Thyroid gland (tissue), 4 donors: ENCODE measurements at regions of chr1 and their contacts with region 1.

Region 1: GRCh38 chr1:44049839-44050238 is 18.6 kb upstream of the SLC6A9 start:
- DNase-seq: no peak
- H3K4me3 ChIP-seq: no peak overlapping the region
- H3K27ac ChIP-seq: no peak overlapping the region
- H3K4me1 ChIP-seq: no peaks in the 10 kb centered on the region
- H3K27me3 ChIP-seq: no peaks in the 10 kb centered on the region
- CTCF ChIP-seq: no peak
- POLR2A ChIP-seq: no peak

Region 2: DNA sequence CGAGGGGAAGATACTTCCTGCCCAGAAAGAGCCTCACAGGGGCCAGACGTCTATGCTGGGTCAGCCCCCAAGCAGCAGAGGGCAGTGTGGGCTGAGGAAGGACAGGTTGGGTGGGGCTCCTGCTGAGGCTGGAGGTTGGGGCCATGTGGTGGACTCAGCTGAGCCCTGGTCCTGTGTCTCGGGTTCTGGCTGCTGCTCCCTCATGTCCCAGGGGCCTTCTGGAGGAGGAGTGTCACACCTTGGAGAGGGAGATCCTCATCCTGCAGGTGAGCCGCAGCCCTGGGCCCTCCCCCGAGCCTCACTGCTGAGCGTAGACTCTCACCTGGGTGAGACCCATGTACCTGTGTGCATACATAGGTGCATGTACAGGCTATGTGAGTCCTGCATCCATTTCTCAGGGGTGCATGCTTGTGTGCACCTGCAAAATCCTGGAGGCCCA is 54.9 kb before region 1 on chr1:
- intact Hi-C with region 1: no loop called
- DNase-seq: no peak
- H3K4me3 ChIP-seq: no peak overlapping the region
- H3K27ac ChIP-seq: no peak overlapping the region
- H3K4me1 ChIP-seq: peaks cover 15 to 17% of the 10 kb centered on the region in 2 donors
- H3K27me3 ChIP-seq: no peaks in the 10 kb centered on the region
- CTCF ChIP-seq: peak in 1 of 6 experiments; percentile 15
- POLR2A ChIP-seq: no peak

Region 3: GRCh38 chr1:44008259-44008658 is 41.6 kb before region 1 on chr1:
- intact Hi-C with region 1: loop called (anchors 5 kb)
- DNase-seq: no peak
- H3K4me3 ChIP-seq: no peak overlapping the region
- H3K27ac ChIP-seq: no peak overlapping the region
- H3K4me1 ChIP-seq: peaks cover 0 to 4% of the 10 kb centered on the region in 2 donors
- H3K27me3 ChIP-seq: no peaks in the 10 kb centered on the region
- CTCF ChIP-seq: no peak
- POLR2A ChIP-seq: no peak

Region 4: GRCh38 chr1:44283524-44284173 is 233.8 kb after region 1 on chr1:
- intact Hi-C with region 1: no loop called
- DNase-seq: no peak
- H3K4me3 ChIP-seq: no peak overlapping the region
- H3K27ac ChIP-seq: no peak overlapping the region
- H3K4me1 ChIP-seq: no peaks in the 10 kb centered on the region
- H3K27me3 ChIP-seq: no peaks in the 10 kb centered on the region
- CTCF ChIP-seq: no peak
- POLR2A ChIP-seq: no peak

Region 5: DNA sequence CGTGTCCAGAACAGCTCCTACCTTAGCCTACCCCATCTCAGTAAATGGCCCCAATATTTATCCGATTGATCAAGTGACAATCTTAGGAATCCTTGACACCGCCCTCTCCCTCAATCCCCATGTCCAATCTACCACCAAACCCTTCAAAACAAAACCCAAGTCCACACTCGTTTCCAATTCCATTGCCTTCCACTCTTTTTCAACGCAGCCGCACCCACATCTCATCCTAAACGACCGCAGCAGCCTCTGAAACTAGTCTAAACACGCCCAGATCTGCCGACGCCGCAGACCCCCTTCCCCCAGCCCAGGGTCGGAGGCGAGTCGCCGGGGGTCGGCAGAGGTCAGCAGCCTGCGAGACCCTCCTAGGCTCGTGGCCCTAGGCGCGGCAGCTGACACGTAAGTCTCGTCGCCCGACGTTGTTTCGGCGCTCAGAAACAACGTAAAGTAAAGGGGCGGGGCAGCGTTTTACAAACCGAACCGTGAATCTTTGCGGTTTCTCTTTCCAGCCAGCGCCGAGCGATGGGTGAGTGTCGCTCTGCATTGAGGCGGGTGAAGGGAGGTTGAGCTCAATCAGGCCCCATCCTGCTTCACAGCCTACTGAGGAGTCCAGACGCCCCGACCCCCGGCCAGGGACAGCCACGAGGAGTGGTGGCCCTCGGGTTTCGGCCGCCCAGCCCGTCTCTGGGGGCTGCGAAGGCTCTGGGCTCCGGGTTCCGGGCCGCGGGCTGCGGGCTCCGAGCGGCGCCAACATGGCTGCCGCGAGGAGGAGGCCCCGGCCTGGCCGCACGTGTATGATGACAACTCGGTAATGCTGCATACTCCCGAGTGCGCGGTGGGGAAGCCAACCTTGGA is 725.5 kb after region 1 on chr1 and contains the start of gene RPS8:
- intact Hi-C with region 1: no loop called
- DNase-seq: peak; percentile 91 to 92
- H3K4me3 ChIP-seq: peak within 1 kb of the TSS; percentile 57 to 96 (median 71)
- H3K27ac ChIP-seq: peak within 1 kb of the TSS; percentile 88 to 90 (median 89)
- H3K4me1 ChIP-seq: peaks cover 12 to 14% of the 10 kb centered on the region in 2 donors
- H3K27me3 ChIP-seq: no peaks in the 10 kb centered on the region
- CTCF ChIP-seq: peak in 1 of 6 experiments; percentile 3
- POLR2A ChIP-seq: peak; percentile 33 to 94
- total RNA-seq, gene RPS8: 1,167 to 2,709 (median 1,595) TPM